ENCODE measurements at regions of chr10 and their contacts with region 1.

Region 1: DNA sequence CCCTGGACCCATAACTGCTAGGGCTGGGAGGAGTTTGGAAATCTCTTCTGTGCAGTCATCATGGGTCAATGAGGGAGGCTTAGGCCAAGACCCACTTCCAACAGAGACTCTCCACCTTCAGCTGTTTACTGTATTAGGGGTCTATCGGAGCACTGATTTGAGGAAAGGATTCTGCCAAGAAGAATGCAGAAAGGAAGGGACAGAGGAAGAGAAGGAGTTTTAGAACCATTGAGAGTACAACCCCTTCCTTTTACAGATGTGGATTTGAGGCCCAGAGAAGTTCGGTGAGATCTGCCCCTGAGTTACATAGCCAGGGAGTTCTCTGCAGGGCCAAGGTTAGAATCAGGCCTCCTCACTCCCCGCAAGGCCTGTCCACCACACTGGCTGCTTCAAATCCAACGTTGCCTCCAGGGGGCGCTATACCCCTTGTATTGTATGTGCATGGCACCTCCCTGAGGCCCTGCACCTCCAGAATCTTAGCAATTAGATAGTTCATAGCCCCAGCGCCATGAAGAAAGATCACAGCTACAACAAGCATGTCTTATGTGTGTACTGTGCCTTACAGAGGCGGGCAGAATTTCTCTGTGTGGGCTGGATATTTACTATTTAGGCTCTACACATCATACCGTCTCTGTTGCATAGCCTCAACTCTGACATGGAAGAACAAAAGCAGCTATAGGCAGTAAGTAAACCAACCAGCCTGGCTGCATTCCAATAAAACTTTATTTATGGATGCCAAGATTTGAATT is 246.8 kb downstream of the SKIDA1 start:
- DNase-seq: peak; percentile 87 to 92 (median 91)
- H3K4me3 ChIP-seq: no peak overlapping the region
- H3K27ac ChIP-seq: no peak overlapping the region
- H3K4me1 ChIP-seq: no peaks in the 10 kb centered on the region
- H3K27me3 ChIP-seq: no peaks in the 10 kb centered on the region

Region 2: DNA sequence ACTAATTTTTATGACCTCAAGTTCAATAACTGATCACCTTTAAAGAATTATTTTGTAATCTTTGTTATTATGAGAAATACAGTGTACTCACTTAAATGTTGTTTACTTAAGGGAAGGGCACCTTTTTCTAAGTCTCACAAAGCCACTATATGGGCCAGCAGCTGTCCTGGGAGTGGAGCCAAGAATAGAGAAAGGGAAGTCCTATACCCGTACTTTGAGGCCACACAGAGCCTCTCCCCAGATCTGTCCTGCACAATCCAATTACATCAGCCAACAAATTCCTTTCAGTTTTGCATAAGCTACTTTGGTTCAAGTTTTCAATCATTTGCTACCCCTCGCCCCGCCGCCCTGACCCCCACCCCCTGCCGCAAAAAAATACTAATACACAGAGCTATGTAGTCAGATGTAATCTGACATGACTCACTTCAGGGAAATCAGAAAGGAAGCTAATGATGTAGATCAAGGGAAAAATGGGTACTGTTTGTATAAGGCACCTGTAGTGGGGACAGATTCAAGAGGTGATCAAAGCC is 84.1 kb before region 1 on chr10:
- CTCF ChIA-PET with region 1: no interaction called
- POLR2A ChIA-PET with region 1: no interaction called
- DNase-seq: peak in 2 of 3 donors; percentile 63 to 70
- H3K4me3 ChIP-seq: no peak overlapping the region
- H3K27ac ChIP-seq: no peak overlapping the region
- H3K4me1 ChIP-seq: peaks cover 0 to 3% (median 0%) of the 10 kb centered on the region in 4 experiments
- H3K27me3 ChIP-seq: no peaks in the 10 kb centered on the region

Region 3: DNA sequence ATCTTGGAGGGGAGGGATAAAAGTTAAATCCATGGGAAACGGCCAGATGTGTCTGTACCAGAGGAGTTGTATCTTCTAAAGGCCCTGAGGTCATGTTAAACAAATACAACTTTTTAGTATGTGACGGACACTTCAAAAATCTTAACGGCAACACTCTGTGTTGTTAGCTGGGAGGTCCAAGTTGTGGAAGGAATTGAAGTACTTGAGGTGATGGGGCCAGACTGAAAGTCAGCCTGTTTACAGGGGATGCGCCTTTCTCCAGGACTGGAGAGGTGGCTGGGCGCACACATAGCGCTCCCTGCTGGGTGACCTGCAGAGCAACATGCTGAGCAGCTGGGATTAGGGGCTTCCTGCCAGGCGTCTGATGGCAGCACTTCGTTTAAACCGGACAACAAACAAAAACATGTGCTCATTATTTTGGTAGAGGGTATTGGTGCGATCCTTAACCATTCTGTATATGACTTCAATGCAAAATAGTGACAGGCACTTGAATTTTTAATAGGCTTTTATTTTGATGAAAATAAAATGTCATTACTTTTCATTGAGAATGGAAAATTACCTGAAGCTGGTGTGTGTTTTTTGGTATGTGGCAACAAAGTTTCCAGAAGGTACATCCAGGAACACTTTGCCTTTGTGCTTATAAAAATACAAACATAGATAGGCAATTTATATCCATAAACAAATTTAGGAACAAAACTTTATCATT is 453.6 kb after region 1 on chr10:
- CTCF ChIA-PET with region 1: interaction called, 13 read pairs
- POLR2A ChIA-PET with region 1: no interaction called
- DNase-seq: peak; percentile 79 to 84 (median 84)
- H3K4me3 ChIP-seq: no peak overlapping the region
- H3K27ac ChIP-seq: no peak overlapping the region
- H3K4me1 ChIP-seq: peaks cover 10 to 18% (median 14%) of the 10 kb centered on the region in 4 experiments
- H3K27me3 ChIP-seq: no peaks in the 10 kb centered on the region